ENCODE measurements at regions of chr3 and their contacts with region 1.

Region 1: DNA sequence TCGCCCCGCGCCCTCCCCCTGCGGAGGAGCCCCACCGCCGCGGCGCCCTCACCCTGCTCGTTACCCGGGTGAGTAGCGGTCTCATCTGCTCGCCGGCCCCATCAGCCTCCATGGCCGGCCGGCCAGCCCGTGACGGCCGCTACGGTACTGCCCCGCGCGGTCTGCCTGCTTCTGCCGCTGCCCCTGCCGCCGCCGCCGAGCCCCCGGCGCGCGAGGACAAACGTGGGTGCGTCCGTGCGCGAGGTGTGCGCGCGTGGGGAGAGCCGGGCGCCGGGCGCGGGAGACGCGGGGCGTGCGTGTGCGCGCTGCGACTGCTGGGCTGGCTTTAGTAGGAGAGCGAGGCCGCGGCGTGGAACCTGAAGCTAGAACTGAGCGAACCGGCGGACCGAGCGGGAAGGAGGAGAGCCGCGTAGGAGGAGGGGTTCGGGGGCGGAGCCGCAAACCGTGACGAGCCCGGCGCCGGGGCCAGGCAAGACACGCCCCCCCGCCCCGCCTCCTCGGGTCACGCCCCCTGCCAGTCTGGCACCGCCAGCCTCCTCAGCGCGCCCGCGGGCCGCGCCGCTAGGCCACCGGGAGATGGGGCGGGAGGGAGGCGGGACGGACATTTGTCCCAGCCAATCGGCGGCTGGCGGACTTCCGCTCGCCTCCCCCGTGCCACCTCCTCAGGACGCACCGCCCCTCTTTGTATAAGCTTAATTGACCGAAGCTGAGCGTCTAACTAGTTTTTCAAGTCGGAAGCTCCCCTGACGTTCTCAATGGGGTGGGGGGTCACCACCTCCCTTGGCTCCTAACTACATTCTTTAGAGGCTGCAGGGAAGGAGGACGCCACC is at the start of gene SLC4A7:
- DNase-seq: peak; percentile 97 to 99 (median 98)
- H3K4me3 ChIP-seq: peak within 1 kb of the TSS; percentile 78 to 88
- H3K4me3 Mint-ChIP-seq: peak within 1 kb of the TSS; percentile 94 to 100 (median 99)
- H3K27ac ChIP-seq: peak within 1 kb of the TSS; percentile 83
- H3K27ac Mint-ChIP-seq: peak within 1 kb of the TSS; percentile 96 to 98 (median 97)
- H3K4me1 ChIP-seq: peaks cover 41% of the 10 kb centered on the region
- H3K4me1 Mint-ChIP-seq: peaks cover 28 to 48% (median 35%) of the 10 kb centered on the region in 4 donors
- H3K27me3 ChIP-seq: no peaks in the 10 kb centered on the region
- H3K27me3 Mint-ChIP-seq: no peaks in the 10 kb centered on the region
- total RNA-seq, gene SLC4A7: 98.5 to 103 TPM

Region 2: GRCh38 chr3:25664810-25665314 is 1819.4 kb before region 1 on chr3 and contains the start of gene TOP2B:
- CTCF ChIA-PET with region 1: no interaction called
- POLR2A ChIA-PET with region 1: no interaction called
- intact Hi-C with region 1: loop called (anchors 5 kb)
- DNase-seq: peak; percentile 94 to 97 (median 95)
- H3K4me3 ChIP-seq: peak within 1 kb of the TSS; percentile 51 to 79
- H3K4me3 Mint-ChIP-seq: peak within 1 kb of the TSS; percentile 98 to 100 (median 99)
- H3K27ac ChIP-seq: peak within 1 kb of the TSS; percentile 86
- H3K27ac Mint-ChIP-seq: peak within 1 kb of the TSS; percentile 99 to 100 (median 100)
- H3K4me1 ChIP-seq: peaks cover 45% of the 10 kb centered on the region
- H3K4me1 Mint-ChIP-seq: peaks cover 27 to 58% (median 43%) of the 10 kb centered on the region in 4 donors
- H3K27me3 ChIP-seq: no peaks in the 10 kb centered on the region
- H3K27me3 Mint-ChIP-seq: no peaks in the 10 kb centered on the region
- total RNA-seq, gene TOP2B: 161 to 175 TPM

Region 3: DNA sequence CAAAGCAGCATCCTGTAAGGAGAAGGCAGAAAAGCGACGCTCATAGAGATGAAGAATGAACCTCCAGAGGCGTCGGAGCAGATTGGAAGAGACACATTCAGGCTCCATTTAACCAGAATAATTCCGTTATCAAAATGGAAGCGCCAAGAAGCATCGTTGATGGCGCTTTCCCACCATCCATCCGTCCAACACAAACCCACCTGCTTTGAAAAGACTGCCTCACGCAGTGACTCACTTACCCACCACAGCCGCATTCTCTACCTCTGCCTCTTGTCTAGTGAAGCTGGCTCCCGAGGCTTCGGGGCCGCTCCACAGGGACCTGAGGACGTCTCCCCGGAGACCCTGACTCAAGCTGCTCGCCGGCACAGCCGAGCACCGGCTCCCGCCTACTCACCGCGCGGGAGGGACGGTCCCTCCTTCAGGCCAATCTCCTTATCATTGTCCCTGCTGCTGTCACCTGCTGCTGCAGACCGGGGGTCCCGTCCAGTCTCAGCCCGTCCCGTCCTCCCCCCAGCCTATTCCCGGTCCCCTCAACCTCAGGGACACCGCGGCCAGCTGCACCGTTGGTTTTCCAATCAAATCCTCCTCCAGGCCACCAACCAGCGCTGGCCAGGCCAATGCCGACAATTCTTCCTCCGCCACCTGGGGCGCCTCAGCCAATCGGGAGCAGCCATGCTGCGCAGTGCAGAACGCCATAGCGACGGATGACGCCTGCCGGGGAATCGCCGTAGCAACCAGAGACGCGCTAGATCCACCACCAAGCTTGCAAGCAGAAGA is 115.2 kb before region 1 on chr3 and contains the start of gene NEK10:
- CTCF ChIA-PET with region 1: no interaction called
- POLR2A ChIA-PET with region 1: interaction called, 19 read pairs
- intact Hi-C with region 1: loop called (anchors 1 kb)
- DNase-seq: peak; percentile 91 to 94 (median 93)
- H3K4me3 ChIP-seq: peak within 1 kb of the TSS; percentile 64 to 81
- H3K4me3 Mint-ChIP-seq: peak within 1 kb of the TSS; percentile 91 to 97 (median 96)
- H3K27ac ChIP-seq: peak within 1 kb of the TSS; percentile 39
- H3K27ac Mint-ChIP-seq: peak within 1 kb of the TSS; percentile 80 to 98 (median 94)
- H3K4me1 ChIP-seq: peaks cover 11% of the 10 kb centered on the region
- H3K4me1 Mint-ChIP-seq: peaks cover 12 to 20% (median 17%) of the 10 kb centered on the region in 4 donors
- H3K27me3 ChIP-seq: no peaks in the 10 kb centered on the region
- H3K27me3 Mint-ChIP-seq: no peaks in the 10 kb centered on the region
- total RNA-seq, gene NEK10: 1.4 to 2.7 TPM

Region 4: GRCh38 chr3:27533718-27534573 is 49.7 kb after region 1 on chr3:
- CTCF ChIA-PET with region 1: no interaction called
- POLR2A ChIA-PET with region 1: interaction called, 33 read pairs
- intact Hi-C with region 1: loop called (anchors 2 kb)
- DNase-seq: peak; percentile 15 to 59 (median 29)
- H3K4me3 ChIP-seq: peak overlapping the region in 1 of 2 donors; percentile 37
- H3K4me3 Mint-ChIP-seq: peak overlapping the region; percentile 15 to 78 (median 72)
- H3K27ac ChIP-seq: no peak overlapping the region
- H3K27ac Mint-ChIP-seq: peak overlapping the region; percentile 83 to 98 (median 92)
- H3K4me1 ChIP-seq: peaks cover 24% of the 10 kb centered on the region
- H3K4me1 Mint-ChIP-seq: peaks cover 15 to 27% (median 21%) of the 10 kb centered on the region in 4 donors
- H3K27me3 ChIP-seq: no peaks in the 10 kb centered on the region
- H3K27me3 Mint-ChIP-seq: no peaks in the 10 kb centered on the region

Region 5: GRCh38 chr3:27659279-27660021 is 175.2 kb after region 1 on chr3:
- CTCF ChIA-PET with region 1: interaction called, 3 read pairs
- POLR2A ChIA-PET with region 1: no interaction called
- intact Hi-C with region 1: loop called (anchors 1 kb)
- DNase-seq: peak in 4 of 5 donors; percentile 29 to 42 (median 38)
- H3K4me3 ChIP-seq: no peak overlapping the region
- H3K4me3 Mint-ChIP-seq: no peak overlapping the region
- H3K27ac ChIP-seq: no peak overlapping the region
- H3K27ac Mint-ChIP-seq: peak overlapping the region in 1 of 7 donors; percentile 30
- H3K4me1 ChIP-seq: no peaks in the 10 kb centered on the region
- H3K4me1 Mint-ChIP-seq: peaks cover 9 to 15% (median 11%) of the 10 kb centered on the region in 4 donors
- H3K27me3 ChIP-seq: no peaks in the 10 kb centered on the region
- H3K27me3 Mint-ChIP-seq: peaks cover 0 to 2% of the 10 kb centered on the region in 2 donors

Region 6: DNA sequence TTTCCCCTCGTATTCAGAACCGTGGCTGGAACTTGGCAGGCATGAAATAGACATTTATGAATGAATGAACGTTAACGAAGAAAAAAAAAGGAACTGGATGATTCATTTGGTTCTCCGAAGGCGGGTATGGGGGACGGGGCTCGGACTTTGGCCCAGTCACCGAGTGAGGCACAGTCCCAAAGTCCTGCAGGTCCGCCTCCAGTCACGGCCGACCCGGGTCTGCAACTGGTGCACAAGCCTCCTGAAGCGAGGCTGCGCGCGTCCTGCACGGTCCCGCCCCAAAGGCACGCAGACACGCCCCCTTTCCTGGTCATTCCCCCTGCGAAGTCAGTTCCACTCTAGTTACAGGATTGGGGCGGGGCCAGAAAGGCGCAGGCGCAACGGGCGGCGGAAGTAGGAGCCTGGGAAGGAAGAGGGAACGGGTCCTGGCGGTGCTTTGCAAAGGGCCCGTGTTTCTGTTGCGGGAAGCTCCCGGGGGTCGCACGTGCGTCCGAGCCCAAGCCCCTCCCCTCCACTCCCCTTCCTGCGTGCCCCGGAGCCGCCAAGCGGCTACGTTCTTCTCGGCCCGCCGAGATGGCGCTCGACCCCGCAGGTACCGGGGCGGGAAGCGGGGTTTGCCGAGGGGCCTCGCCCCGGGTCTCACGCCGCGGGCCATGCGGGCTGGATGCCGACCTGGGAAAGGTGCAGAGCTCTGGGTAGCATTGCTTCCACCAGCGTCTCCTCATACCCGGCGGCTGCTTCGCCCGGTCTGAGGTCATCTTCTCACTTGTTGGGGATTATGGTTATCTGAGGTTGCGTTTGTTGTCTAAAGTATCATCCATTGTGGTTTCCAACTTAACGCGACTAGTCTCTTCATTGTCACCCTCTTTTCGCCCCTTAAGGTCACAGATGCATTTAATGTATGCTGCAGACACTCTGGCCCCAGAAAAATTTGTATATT is 757.3 kb after region 1 on chr3 and contains the start of gene CMC1:
- CTCF ChIA-PET with region 1: no interaction called
- POLR2A ChIA-PET with region 1: no interaction called
- intact Hi-C with region 1: loop called (anchors 10 kb)
- DNase-seq: peak; percentile 81 to 92 (median 83)
- H3K4me3 ChIP-seq: peak within 1 kb of the TSS; percentile 82 to 83
- H3K4me3 Mint-ChIP-seq: peak within 1 kb of the TSS; percentile 93 to 97 (median 96)
- H3K27ac ChIP-seq: peak within 1 kb of the TSS; percentile 73
- H3K27ac Mint-ChIP-seq: peak within 1 kb of the TSS; percentile 47 to 96 (median 93)
- H3K4me1 ChIP-seq: peaks cover 51% of the 10 kb centered on the region
- H3K4me1 Mint-ChIP-seq: peaks cover 36 to 62% (median 43%) of the 10 kb centered on the region in 4 donors
- H3K27me3 ChIP-seq: no peaks in the 10 kb centered on the region
- H3K27me3 Mint-ChIP-seq: no peaks in the 10 kb centered on the region
- total RNA-seq, gene CMC1: 15.9 to 18.4 TPM

Measured in CD4-positive, alpha-beta memory T cell (primary cell).